MCF 10A (cell line): ENCODE measurements at regions of chr19 and their contacts with region 1.

Region 1: GRCh38 chr19:35882114-35882832 is 13.9 kb downstream of the APLP1 start:
- DNase-seq: peak; percentile 81
- H3K4me3 Mint-ChIP-seq: no peak overlapping the region
- H3K27ac Mint-ChIP-seq: no peak overlapping the region
- H3K4me1 Mint-ChIP-seq: peaks cover 9% of the 10 kb centered on the region
- H3K27me3 Mint-ChIP-seq: peaks cover 11% of the 10 kb centered on the region
- CTCF ChIP-seq: peak; percentile 75

Region 2: DNA sequence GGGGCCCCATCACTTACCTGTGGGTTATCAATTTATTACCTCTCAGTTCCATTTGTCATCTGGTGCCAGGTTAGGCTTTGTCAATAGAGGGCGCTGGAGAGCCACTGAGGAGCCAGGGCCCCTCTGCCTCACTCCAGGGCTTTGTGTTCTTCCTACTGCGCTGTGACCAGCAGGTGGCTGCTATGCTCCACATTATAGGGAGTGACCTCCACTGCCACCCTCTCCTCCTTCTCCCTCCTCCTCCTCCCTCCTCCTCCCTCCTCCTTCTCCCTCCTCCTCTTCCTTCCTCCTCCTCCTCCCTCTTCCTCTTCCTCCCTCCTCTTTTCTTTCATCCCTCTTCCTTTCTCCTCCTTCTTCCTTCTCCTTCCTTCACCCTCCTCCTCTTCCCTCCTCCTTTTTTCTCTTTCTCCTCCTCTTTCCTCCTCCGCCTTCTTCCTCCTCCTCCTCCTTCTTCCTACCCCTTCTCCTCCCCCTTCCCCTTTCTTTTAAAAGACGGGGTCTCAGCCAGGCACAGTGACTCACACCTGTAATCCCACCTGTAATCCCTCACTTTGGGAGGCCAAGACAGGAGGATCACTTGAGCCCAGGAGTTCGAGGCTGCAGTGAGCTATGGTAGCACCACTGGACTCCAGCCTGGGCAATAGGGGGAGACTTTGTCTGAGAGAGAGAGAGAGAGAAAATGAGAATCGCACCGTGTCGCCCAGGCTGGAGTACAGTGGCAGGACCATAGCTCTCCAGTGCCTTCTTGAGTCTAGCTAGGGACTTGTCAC is 188.3 kb before region 1 on chr19:
- CTCF ChIA-PET with region 1: interaction called, 3 read pairs
- POLR2A ChIA-PET with region 1: no interaction called
- intact Hi-C with region 1: loop called (anchors 5 kb)
- DNase-seq: peak; percentile 93
- H3K4me3 Mint-ChIP-seq: no peak overlapping the region
- H3K27ac Mint-ChIP-seq: no peak overlapping the region
- H3K4me1 Mint-ChIP-seq: no peaks in the 10 kb centered on the region
- H3K27me3 Mint-ChIP-seq: no peaks in the 10 kb centered on the region
- CTCF ChIP-seq: peak; percentile 95

Region 3: DNA sequence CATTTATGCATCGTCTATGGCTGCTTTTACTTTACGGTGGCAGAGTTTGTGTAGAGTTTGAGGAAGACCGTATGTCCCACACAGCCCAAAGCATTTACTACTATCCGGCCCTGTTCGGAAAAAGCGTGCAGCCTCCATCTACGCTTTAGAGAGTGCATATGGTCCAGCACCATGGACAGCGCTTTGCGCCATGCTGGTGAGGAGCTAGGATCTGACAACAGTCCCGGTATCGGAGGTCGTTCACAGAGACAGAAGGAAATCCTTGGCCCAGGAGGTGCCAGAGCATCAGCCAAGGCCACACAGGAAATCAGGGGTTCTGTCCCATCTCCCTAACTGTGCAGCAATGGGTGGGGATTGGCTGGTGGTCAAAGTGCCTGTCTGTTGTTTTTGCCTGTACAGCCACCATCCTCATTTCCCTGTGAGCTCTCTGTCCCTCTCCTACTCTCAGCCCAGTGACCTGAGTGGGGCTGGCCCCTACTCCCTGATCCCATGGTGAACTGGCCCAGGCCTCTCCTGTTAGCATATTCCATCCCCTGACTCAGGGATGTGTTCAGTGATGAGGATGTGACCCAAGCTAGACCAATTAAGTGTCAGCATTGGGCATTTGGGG is 53.5 kb before region 1 on chr19:
- CTCF ChIA-PET with region 1: no interaction called
- POLR2A ChIA-PET with region 1: no interaction called
- intact Hi-C with region 1: loop called (anchors 5 kb)
- DNase-seq: peak; percentile 62
- H3K4me3 Mint-ChIP-seq: no peak overlapping the region
- H3K27ac Mint-ChIP-seq: no peak overlapping the region
- H3K4me1 Mint-ChIP-seq: no peaks in the 10 kb centered on the region
- H3K27me3 Mint-ChIP-seq: peaks cover 59% of the 10 kb centered on the region
- CTCF ChIP-seq: no peak

Region 4: DNA sequence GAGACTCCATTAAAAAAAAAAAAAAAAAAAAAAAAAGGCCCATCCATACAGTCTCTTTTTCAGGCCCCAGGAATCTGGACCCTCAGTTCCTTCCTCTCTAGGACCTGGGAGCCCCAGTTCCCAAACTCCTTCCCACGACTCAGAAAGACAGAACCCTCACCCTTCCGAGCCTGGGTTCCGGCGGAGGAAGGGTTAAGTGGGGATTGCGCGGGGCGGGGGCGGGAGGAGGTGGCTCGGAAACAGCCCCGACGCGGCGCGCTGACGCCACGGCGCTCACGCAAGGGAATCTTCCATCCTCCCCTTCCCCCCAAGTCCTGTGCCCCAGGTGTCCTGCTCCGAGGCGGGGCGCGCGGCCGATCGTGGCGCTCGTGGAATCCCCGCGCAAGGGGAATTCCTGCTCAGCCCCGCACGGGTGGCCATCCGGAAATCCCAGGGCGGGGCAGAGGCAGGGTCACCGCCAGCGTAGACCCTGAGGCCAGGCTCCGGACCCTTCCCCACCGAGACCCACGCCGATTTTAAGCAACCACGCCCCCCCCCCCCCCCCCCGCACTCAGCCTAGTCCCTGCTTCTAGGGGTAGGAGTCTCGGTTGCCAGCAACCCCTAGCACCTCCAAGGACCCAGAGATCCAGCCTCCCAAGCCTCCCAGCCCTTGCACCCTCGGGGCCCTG is 17.4 kb after region 1 on chr19:
- CTCF ChIA-PET with region 1: interaction called, 15 read pairs
- POLR2A ChIA-PET with region 1: interaction called, 3 read pairs
- intact Hi-C with region 1: no loop called
- DNase-seq: peak; percentile 87
- H3K4me3 Mint-ChIP-seq: peak overlapping the region; percentile 90
- H3K27ac Mint-ChIP-seq: peak overlapping the region; percentile 90
- H3K4me1 Mint-ChIP-seq: peaks cover 16% of the 10 kb centered on the region
- H3K27me3 Mint-ChIP-seq: no peaks in the 10 kb centered on the region
- CTCF ChIP-seq: no peak